ENCODE measurements at regions of chr3 and their contacts with region 1.

Region 1: GRCh38 chr3:156151824-156152428 is 31.5 kb downstream of the KCNAB1 start:
- DNase-seq: peak; percentile 72
- H3K4me3 Mint-ChIP-seq: no peak overlapping the region
- H3K27ac Mint-ChIP-seq: no peak overlapping the region
- H3K4me1 Mint-ChIP-seq: peaks cover 4% of the 10 kb centered on the region
- H3K27me3 Mint-ChIP-seq: peaks cover 9% of the 10 kb centered on the region

Region 2: GRCh38 chr3:156071031-156071430 is 80.9 kb before region 1 on chr3:
- CTCF ChIA-PET with region 1: no interaction called
- DNase-seq: no peak
- H3K4me3 Mint-ChIP-seq: no peak overlapping the region
- H3K27ac Mint-ChIP-seq: no peak overlapping the region
- H3K4me1 Mint-ChIP-seq: no peaks in the 10 kb centered on the region
- H3K27me3 Mint-ChIP-seq: peaks cover 12% of the 10 kb centered on the region

Region 3: DNA sequence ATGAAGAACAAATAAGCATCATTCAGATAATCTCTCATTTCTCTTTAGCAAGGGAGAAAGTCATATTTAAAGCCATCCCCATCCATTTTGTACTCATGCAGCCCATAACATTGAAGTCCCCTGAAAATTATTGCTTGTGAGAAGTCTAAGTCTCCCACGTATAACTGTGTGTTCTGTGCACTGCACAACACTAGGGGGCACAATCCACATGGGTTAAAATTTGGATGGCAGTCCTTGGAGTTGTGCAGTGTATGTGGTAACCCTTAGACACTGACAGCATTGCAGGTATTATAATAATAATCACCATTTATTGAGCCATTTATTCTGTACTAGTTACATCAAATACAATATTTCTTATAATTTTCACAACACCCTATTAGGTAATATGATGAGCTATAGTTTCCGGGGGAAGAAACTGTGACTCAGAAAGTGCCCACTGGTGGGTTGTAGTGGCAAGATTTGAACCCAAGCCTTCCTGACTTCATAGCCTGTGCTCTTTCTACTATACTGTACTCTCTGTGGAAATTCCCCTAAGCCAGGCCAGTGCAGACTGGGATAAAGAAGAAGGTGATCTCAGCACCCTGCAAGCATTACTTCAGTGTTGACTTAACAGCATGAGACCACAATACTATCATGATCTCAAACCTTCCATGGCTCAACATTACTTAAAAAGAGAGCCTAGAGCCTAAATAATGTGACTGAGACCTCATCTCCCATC is 15.8 kb before region 1 on chr3:
- CTCF ChIA-PET with region 1: no interaction called
- DNase-seq: no peak
- H3K4me3 Mint-ChIP-seq: no peak overlapping the region
- H3K27ac Mint-ChIP-seq: no peak overlapping the region
- H3K4me1 Mint-ChIP-seq: no peaks in the 10 kb centered on the region
- H3K27me3 Mint-ChIP-seq: peaks cover 27% of the 10 kb centered on the region

Region 4: GRCh38 chr3:156304406-156304805 is 152.5 kb after region 1 on chr3:
- CTCF ChIA-PET with region 1: no interaction called
- DNase-seq: no peak
- H3K4me3 Mint-ChIP-seq: no peak overlapping the region
- H3K27ac Mint-ChIP-seq: no peak overlapping the region
- H3K4me1 Mint-ChIP-seq: no peaks in the 10 kb centered on the region
- H3K27me3 Mint-ChIP-seq: peaks cover 13% of the 10 kb centered on the region

Region 5: DNA sequence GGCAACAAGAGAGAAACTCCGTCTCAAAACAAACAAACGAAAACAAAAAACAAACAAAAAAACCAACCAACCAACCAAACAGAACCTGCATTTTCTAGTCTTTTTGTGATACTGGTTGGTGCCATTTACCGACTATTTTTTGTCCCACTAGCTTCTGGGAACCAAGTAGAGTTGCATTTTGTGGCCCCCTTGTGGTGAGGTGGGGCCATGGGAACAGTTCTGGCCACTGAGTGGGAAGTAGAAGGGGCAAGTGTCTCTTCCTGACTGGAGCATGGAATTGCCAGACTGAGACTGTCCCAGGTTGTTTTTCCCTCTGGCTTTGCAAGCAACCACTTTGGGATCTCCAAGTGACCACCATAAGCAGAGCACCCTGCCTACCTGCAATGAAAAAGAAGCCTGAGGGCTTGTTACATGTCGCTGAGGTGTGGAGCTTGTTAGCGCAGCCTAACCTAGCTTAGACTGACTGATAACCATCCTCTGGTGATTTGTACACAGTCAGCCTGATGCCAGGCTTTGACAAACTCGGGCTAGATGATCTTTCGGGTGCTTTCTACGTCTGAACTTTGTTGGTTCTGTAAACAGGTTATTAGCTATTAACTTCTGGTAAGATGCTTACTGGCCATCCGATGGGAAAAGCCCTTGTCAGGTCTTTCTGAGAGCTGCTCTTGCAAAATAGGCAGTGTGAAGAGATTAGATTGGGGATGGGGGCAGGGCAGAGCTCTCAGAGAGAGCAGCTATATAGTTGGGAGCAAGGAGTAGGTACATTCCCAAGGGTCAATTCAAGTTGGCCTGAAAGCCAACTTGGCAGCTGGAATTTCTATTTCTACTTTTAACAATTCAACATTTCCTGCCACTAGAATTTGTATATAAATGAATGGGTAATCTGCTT is 230.8 kb after region 1 on chr3:
- CTCF ChIA-PET with region 1: interaction called, 63 read pairs
- DNase-seq: peak; percentile 33
- H3K4me3 Mint-ChIP-seq: no peak overlapping the region
- H3K27ac Mint-ChIP-seq: no peak overlapping the region
- H3K4me1 Mint-ChIP-seq: no peaks in the 10 kb centered on the region
- H3K27me3 Mint-ChIP-seq: peaks cover 39% of the 10 kb centered on the region

Region 6: GRCh38 chr3:156449712-156450574 is 298.0 kb after region 1 on chr3:
- CTCF ChIA-PET with region 1: interaction called, 17 read pairs
- DNase-seq: no peak
- H3K4me3 Mint-ChIP-seq: no peak overlapping the region
- H3K27ac Mint-ChIP-seq: no peak overlapping the region
- H3K4me1 Mint-ChIP-seq: no peaks in the 10 kb centered on the region
- H3K27me3 Mint-ChIP-seq: peaks cover 22% of the 10 kb centered on the region

Region 7: DNA sequence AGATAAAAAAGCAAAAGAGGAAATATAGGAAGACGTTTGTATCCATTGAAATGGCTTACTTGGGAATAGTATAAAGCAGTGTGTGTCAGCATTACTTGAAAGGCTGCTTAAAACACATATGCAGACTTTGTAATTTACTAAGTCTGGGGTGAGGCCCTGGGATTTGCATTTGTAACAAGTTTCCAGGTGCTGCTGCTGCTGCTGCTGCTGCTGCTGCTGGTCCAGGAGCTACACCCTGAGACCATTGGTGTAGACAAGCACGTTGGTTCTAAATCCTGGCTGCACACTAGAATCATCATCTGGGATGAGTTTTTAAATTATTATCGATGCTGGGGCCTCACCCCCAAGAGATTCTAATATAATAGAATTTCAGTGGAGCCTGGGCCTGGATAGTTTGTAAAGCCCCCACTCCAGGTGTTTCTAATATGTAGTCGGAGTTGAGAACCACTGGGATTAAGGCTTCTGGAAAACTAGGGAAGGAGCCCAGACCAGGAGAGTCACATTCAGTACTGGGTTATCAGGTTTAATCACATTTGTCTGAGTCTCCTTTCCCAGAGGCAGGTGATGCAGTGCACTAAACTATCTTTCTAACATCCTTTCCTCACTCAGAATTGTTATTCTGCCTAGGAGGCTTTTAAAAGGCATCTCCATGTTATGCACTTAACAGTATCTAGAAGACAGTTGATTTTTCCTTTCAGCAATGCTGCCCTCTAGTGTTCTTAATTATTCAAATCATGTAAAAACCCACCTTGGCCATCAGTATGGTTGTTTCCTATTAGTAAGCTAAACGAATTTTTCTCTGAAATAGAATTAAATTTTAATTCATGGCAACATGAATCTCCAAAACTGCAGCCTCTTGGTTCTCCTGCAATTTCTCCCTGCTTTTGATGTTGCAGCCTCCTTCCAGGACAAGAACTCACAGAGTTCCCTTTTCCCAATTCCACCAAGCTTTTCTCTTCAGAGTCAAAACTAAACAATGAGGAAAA is 357.6 kb after region 1 on chr3:
- CTCF ChIA-PET with region 1: interaction called, 121 read pairs
- DNase-seq: no peak
- H3K4me3 Mint-ChIP-seq: no peak overlapping the region
- H3K27ac Mint-ChIP-seq: no peak overlapping the region
- H3K4me1 Mint-ChIP-seq: peaks cover 19% of the 10 kb centered on the region
- H3K27me3 Mint-ChIP-seq: peaks cover 25% of the 10 kb centered on the region

Region 8: DNA sequence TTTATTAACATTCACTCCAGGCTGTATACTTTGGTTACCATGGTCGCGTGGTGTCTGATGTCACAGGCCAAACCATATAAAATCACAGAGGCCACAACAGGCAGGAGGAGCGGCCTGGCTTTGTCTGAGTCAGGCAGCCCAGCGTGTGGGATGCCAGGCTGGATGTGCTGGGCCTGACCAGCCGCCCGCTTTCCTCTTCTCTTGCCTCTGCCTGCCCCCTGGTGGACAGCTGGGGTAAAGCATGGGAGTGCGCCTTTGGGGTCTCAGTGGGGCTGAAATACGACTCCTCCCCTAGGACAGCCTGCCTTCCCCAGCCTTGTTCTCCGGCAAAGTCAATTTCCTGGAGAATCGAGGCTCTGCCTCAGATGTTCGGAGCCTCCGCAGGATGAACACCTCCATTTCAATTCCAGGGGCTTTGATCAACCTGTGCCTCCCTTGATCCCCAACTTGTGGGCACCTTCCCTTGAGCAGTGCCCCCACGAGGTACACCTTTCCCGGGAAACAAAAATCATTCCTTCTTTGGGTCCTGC is 929.8 kb after region 1 on chr3:
- CTCF ChIA-PET with region 1: interaction called, 16 read pairs
- DNase-seq: peak; percentile 87
- H3K4me3 Mint-ChIP-seq: no peak overlapping the region
- H3K27ac Mint-ChIP-seq: no peak overlapping the region
- H3K4me1 Mint-ChIP-seq: peaks cover 42% of the 10 kb centered on the region
- H3K27me3 Mint-ChIP-seq: peaks cover 4% of the 10 kb centered on the region

Region 9: DNA sequence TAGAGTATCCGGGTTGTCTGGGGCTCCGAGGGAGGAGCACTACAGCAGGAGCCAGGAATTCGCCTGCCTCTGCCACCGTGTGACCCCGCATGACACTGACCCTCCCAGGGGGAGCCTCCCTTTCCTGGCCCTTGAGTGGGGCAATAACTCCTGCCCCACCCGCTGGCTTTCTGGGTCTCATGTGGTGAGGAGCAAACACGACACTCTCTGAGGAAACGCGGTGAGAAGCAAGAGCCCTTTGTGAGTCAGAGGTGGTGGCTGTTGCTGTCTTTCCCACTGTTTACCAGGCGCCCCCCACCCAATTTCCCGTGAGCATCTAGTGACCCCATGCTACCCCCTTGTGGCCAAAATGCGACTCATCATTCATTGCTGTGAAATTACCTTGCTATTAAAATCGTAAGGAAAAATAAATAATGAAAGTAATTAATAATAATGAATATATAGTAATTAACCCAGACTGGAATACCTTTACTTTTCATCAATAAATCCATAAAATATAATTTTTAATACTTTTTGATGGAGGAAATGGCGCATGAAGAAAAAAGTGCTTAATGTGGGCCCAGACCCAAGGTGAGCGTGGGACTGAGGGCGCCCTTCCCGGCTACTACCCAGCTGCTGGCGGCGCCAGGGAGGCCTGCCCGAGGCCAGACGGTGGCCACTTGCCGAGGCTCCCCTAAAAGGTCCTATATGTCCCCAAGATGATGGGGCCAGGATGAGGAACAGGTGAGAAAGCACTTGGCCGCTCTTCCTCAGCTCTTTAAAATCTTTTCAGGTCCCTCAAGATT is 978.7 kb after region 1 on chr3:
- CTCF ChIA-PET with region 1: interaction called, 86 read pairs
- DNase-seq: peak; percentile 86
- H3K4me3 Mint-ChIP-seq: peak overlapping the region; percentile 29
- H3K27ac Mint-ChIP-seq: peak overlapping the region; percentile 98
- H3K4me1 Mint-ChIP-seq: peaks cover 88% of the 10 kb centered on the region
- H3K27me3 Mint-ChIP-seq: no peaks in the 10 kb centered on the region